ENCODE measurements at regions of chr9 and their contacts with region 1.

Region 1: GRCh38 chr9:469672-470551 is 255.2 kb downstream of the DOCK8 start:
- DNase-seq: peak; percentile 80 to 89 (median 88)
- H3K4me3 ChIP-seq: peak overlapping the region; percentile 74 to 88
- H3K4me3 Mint-ChIP-seq: peak overlapping the region; percentile 89 to 99 (median 96)
- H3K27ac ChIP-seq: peak overlapping the region; percentile 68
- H3K27ac Mint-ChIP-seq: peak overlapping the region; percentile 93 to 98 (median 96)
- H3K4me1 ChIP-seq: peaks cover 21% of the 10 kb centered on the region
- H3K4me1 Mint-ChIP-seq: peaks cover 17 to 28% (median 22%) of the 10 kb centered on the region in 4 donors
- H3K27me3 ChIP-seq: no peaks in the 10 kb centered on the region
- H3K27me3 Mint-ChIP-seq: no peaks in the 10 kb centered on the region

Region 2: GRCh38 chr9:318646-319045 is 151.3 kb before region 1 on chr9:
- CTCF ChIA-PET with region 1: no interaction called
- POLR2A ChIA-PET with region 1: no interaction called
- intact Hi-C with region 1: no loop called
- DNase-seq: no peak
- H3K4me3 ChIP-seq: no peak overlapping the region
- H3K4me3 Mint-ChIP-seq: no peak overlapping the region
- H3K27ac ChIP-seq: no peak overlapping the region
- H3K27ac Mint-ChIP-seq: peak overlapping the region in 1 of 7 donors; percentile 53
- H3K4me1 ChIP-seq: no peaks in the 10 kb centered on the region
- H3K4me1 Mint-ChIP-seq: peaks cover 0 to 3% (median 0%) of the 10 kb centered on the region in 4 donors
- H3K27me3 ChIP-seq: no peaks in the 10 kb centered on the region
- H3K27me3 Mint-ChIP-seq: no peaks in the 10 kb centered on the region

Region 3: GRCh38 chr9:385818-386398 is 84.0 kb before region 1 on chr9:
- CTCF ChIA-PET with region 1: no interaction called
- POLR2A ChIA-PET with region 1: no interaction called
- intact Hi-C with region 1: no loop called
- DNase-seq: peak in 2 of 5 donors; percentile 13
- H3K4me3 ChIP-seq: no peak overlapping the region
- H3K4me3 Mint-ChIP-seq: no peak overlapping the region
- H3K27ac ChIP-seq: no peak overlapping the region
- H3K27ac Mint-ChIP-seq: peak overlapping the region in 3 of 7 donors; percentile 15 to 64 (median 25)
- H3K4me1 ChIP-seq: no peaks in the 10 kb centered on the region
- H3K4me1 Mint-ChIP-seq: peaks cover 0 to 1% (median 0%) of the 10 kb centered on the region in 4 donors
- H3K27me3 ChIP-seq: no peaks in the 10 kb centered on the region
- H3K27me3 Mint-ChIP-seq: no peaks in the 10 kb centered on the region

Region 4: GRCh38 chr9:419571-420402 is 50.1 kb before region 1 on chr9:
- CTCF ChIA-PET with region 1: no interaction called
- POLR2A ChIA-PET with region 1: no interaction called
- intact Hi-C with region 1: no loop called
- DNase-seq: no peak
- H3K4me3 ChIP-seq: no peak overlapping the region
- H3K4me3 Mint-ChIP-seq: no peak overlapping the region
- H3K27ac ChIP-seq: no peak overlapping the region
- H3K27ac Mint-ChIP-seq: peak overlapping the region in 4 of 7 donors; percentile 30 to 62 (median 42)
- H3K4me1 ChIP-seq: no peaks in the 10 kb centered on the region
- H3K4me1 Mint-ChIP-seq: peaks cover 0 to 2% (median 0%) of the 10 kb centered on the region in 4 donors
- H3K27me3 ChIP-seq: no peaks in the 10 kb centered on the region
- H3K27me3 Mint-ChIP-seq: no peaks in the 10 kb centered on the region

Region 5: DNA sequence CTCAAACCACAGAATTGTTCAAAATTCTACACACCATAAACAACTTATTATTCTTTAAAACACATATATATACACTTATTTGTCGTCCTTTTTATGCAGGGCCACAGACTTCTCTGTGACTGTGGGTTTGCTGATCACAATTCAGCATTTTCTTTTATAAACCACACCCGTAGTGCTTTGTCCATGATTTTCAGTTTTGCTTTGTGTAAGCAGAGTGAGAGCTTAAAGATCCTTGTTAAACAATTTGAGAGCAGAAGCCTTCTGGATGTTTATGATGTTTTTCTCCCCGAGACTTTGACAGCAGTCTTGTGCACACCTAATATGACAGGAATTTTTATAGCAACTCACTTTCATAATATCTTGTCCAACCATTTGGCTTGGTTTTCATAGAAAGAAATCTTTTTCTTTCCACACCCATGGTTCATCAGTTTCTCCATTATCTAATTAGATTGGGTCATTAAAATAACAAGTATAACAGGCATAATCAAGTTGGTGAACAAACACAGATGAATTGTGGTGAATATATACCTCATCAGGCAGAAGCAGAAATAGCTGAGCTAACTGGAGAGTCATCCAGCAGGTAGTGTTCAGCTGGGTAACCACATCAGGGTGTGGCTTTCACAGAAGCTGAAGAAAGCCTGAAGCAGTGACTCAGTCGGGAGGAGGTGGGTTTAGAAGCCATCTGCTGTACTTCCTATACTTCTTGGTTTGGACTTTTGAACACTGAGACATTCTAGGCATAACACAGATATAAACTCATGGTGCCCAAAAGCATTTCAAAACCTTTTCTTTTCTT is 22.5 kb before region 1 on chr9:
- CTCF ChIA-PET with region 1: interaction called, 3 read pairs
- POLR2A ChIA-PET with region 1: interaction called, 7 read pairs
- intact Hi-C with region 1: loop called (anchors 2 kb)
- DNase-seq: peak; percentile 61 to 87 (median 71)
- H3K4me3 ChIP-seq: no peak overlapping the region
- H3K4me3 Mint-ChIP-seq: peak overlapping the region; percentile 1 to 44 (median 20)
- H3K27ac ChIP-seq: peak overlapping the region; percentile 3
- H3K27ac Mint-ChIP-seq: peak overlapping the region; percentile 67 to 90 (median 84)
- H3K4me1 ChIP-seq: peaks cover 22% of the 10 kb centered on the region
- H3K4me1 Mint-ChIP-seq: peaks cover 18 to 34% (median 27%) of the 10 kb centered on the region in 4 donors
- H3K27me3 ChIP-seq: no peaks in the 10 kb centered on the region
- H3K27me3 Mint-ChIP-seq: no peaks in the 10 kb centered on the region

Region 6: DNA sequence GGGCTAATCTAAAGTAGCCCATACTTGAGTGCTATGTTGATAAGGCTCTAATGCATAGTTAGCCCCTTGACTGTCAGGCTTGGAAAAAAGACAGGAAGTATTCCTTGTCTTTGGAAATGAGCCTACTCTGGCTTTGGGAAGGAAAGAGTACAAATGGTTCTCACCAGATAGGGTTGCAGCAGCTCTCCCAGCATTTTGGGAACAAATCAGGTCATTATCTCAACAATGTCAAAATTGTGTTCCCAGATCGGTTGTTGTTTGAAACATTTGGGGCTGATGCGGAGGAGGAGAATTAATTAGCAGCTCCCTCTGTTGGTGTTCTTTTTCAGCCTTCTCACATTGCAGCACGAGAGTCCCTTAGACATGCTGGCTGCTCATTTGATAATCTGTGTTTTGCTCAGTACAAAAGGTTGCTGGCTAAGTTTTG is 76.9 kb after region 1 on chr9:
- CTCF ChIA-PET with region 1: no interaction called
- POLR2A ChIA-PET with region 1: no interaction called
- intact Hi-C with region 1: loop called (anchors 2 kb)
- DNase-seq: peak in 1 of 5 donors; percentile 14
- H3K4me3 ChIP-seq: no peak overlapping the region
- H3K4me3 Mint-ChIP-seq: no peak overlapping the region
- H3K27ac ChIP-seq: no peak overlapping the region
- H3K27ac Mint-ChIP-seq: no peak overlapping the region
- H3K4me1 ChIP-seq: no peaks in the 10 kb centered on the region
- H3K4me1 Mint-ChIP-seq: peaks cover 2 to 15% (median 9%) of the 10 kb centered on the region in 4 donors
- H3K27me3 ChIP-seq: no peaks in the 10 kb centered on the region
- H3K27me3 Mint-ChIP-seq: peaks cover 0 to 7% of the 10 kb centered on the region in 2 donors